MCF 10A (cell line): ENCODE measurements at regions of chr4 and their contacts with region 1.

Region 1: GRCh38 chr4:186472948-186473347 is 82.4 kb downstream of the MTNR1A start:
- DNase-seq: peak; percentile 56
- H3K4me3 Mint-ChIP-seq: no peak overlapping the region
- H3K27ac Mint-ChIP-seq: no peak overlapping the region
- H3K4me1 Mint-ChIP-seq: no peaks in the 10 kb centered on the region
- H3K27me3 Mint-ChIP-seq: no peaks in the 10 kb centered on the region
- CTCF ChIP-seq: peak; percentile 52

Region 2: DNA sequence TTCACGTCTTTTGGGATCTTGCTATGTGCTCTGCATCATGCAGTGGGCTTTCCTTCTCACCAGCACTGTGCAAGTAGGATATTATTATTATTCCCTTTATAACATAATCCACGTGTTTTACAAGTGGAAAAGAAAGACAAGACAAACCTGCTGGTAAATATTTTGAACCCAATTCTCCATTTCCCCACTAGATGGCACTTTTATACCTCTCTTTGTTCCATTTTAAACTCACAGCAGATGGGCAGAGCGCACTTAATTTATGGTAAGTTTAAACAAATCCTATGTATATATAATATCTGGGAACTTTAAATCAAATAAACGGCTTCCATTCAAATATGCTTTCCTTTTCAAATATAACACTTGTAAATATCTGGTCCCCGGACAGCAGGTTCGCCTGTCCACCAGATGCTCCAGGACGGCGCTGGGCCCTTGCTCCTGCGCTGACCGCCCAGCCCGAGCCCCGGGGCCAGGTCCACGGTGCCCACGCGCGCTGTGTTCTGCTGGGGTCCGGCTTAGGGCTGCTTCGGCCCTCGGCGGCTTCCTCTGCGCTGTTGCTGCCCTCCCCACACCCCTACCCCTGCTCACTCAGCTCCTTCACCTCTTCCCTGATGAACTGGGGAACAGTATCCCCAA is 175.8 kb before region 1 on chr4:
- CTCF ChIA-PET with region 1: interaction called, 7 read pairs
- POLR2A ChIA-PET with region 1: no interaction called
- intact Hi-C with region 1: loop called (anchors 1 kb)
- DNase-seq: peak; percentile 62
- H3K4me3 Mint-ChIP-seq: no peak overlapping the region
- H3K27ac Mint-ChIP-seq: no peak overlapping the region
- H3K4me1 Mint-ChIP-seq: no peaks in the 10 kb centered on the region
- H3K27me3 Mint-ChIP-seq: no peaks in the 10 kb centered on the region
- CTCF ChIP-seq: peak; percentile 68

Region 3: GRCh38 chr4:186536285-186536684 is 63.3 kb after region 1 on chr4:
- CTCF ChIA-PET with region 1: no interaction called
- POLR2A ChIA-PET with region 1: no interaction called
- intact Hi-C with region 1: no loop called
- DNase-seq: no peak
- H3K4me3 Mint-ChIP-seq: no peak overlapping the region
- H3K27ac Mint-ChIP-seq: no peak overlapping the region
- H3K4me1 Mint-ChIP-seq: no peaks in the 10 kb centered on the region
- H3K27me3 Mint-ChIP-seq: no peaks in the 10 kb centered on the region
- CTCF ChIP-seq: no peak

Region 4: GRCh38 chr4:186554539-186554913 is 81.6 kb after region 1 on chr4:
- CTCF ChIA-PET with region 1: interaction called, 3 read pairs
- POLR2A ChIA-PET with region 1: no interaction called
- intact Hi-C with region 1: loop called (anchors 1 kb)
- DNase-seq: peak; percentile 53
- H3K4me3 Mint-ChIP-seq: peak overlapping the region; percentile 68
- H3K27ac Mint-ChIP-seq: no peak overlapping the region
- H3K4me1 Mint-ChIP-seq: peaks cover 7% of the 10 kb centered on the region
- H3K27me3 Mint-ChIP-seq: peaks cover 12% of the 10 kb centered on the region
- CTCF ChIP-seq: peak; percentile 13